ENCODE measurements at regions of chr12 and their contacts with region 1.

Region 1: DNA sequence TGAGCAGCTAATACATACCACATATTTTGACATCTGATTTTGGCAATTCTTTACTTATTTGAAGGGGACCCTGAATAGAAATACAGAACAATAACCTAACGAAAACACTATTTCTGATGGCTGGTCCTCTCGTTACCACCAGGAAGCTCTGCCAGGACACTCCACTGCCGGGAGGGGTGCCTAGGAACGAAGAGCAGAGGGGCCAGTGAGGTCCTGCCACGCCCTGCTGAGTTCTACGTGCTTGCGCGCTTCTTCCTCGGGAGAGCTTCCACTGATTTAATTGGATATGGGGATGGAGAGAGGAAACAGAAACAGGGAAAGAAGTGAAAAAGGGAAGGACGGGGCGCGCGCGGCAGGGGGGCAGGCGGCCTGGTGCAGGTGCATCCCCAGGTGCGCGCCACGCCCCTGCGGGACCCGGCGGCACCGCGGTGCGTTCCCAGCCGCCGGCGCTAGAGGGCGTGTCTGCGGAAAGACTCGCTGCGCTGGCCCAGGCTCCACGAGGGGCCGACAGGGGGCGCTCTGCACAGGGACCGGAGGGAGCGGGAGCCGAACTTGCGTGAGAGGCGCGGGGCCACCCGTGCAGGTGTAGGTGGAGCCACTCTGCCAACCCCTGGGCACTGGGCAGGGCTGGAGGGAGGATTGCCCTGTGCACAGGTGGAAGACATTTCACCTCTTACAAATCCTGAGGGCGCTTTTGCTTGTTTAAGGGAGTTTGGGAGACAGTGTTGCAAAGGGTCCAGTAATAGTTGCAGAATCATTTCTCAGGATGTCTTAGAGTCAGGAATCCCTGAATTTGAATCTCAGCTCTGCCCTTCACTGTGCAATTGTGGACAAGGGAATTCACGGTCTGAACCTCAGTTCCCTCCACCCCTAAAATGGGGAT is 986.3 kb upstream of the TMEM132C start:
- DNase-seq: peak in 1 of 2 experiments; percentile 68
- H3K4me3 ChIP-seq: no peak overlapping the region
- H3K4me3 Mint-ChIP-seq: no peak overlapping the region
- H3K27ac Mint-ChIP-seq: no peak overlapping the region
- H3K4me1 ChIP-seq: no peaks in the 10 kb centered on the region
- H3K4me1 Mint-ChIP-seq: no peaks in the 10 kb centered on the region
- H3K27me3 ChIP-seq: no peaks in the 10 kb centered on the region
- H3K27me3 Mint-ChIP-seq: peaks cover 6% of the 10 kb centered on the region
- CTCF ChIP-seq: peak; percentile 66 to 88

Region 2: GRCh38 chr12:127257366-127257935 is 23.2 kb before region 1 on chr12:
- CTCF ChIA-PET with region 1: no interaction called
- POLR2A ChIA-PET with region 1: no interaction called
- intact Hi-C with region 1: no loop called
- DNase-seq: no peak
- H3K4me3 ChIP-seq: no peak overlapping the region
- H3K4me3 Mint-ChIP-seq: no peak overlapping the region
- H3K27ac Mint-ChIP-seq: no peak overlapping the region
- H3K4me1 ChIP-seq: no peaks in the 10 kb centered on the region
- H3K4me1 Mint-ChIP-seq: no peaks in the 10 kb centered on the region
- H3K27me3 ChIP-seq: no peaks in the 10 kb centered on the region
- H3K27me3 Mint-ChIP-seq: no peaks in the 10 kb centered on the region
- CTCF ChIP-seq: no peak

Region 3: GRCh38 chr12:127355061-127355841 is 74.6 kb after region 1 on chr12:
- CTCF ChIA-PET with region 1: no interaction called
- POLR2A ChIA-PET with region 1: no interaction called
- intact Hi-C with region 1: loop called (anchors 5 kb)
- DNase-seq: peak in 1 of 2 experiments; percentile 19
- H3K4me3 ChIP-seq: no peak overlapping the region
- H3K4me3 Mint-ChIP-seq: no peak overlapping the region
- H3K27ac Mint-ChIP-seq: no peak overlapping the region
- H3K4me1 ChIP-seq: no peaks in the 10 kb centered on the region
- H3K4me1 Mint-ChIP-seq: no peaks in the 10 kb centered on the region
- H3K27me3 ChIP-seq: no peaks in the 10 kb centered on the region
- H3K27me3 Mint-ChIP-seq: no peaks in the 10 kb centered on the region
- CTCF ChIP-seq: peak; percentile 32 to 45

Region 4: DNA sequence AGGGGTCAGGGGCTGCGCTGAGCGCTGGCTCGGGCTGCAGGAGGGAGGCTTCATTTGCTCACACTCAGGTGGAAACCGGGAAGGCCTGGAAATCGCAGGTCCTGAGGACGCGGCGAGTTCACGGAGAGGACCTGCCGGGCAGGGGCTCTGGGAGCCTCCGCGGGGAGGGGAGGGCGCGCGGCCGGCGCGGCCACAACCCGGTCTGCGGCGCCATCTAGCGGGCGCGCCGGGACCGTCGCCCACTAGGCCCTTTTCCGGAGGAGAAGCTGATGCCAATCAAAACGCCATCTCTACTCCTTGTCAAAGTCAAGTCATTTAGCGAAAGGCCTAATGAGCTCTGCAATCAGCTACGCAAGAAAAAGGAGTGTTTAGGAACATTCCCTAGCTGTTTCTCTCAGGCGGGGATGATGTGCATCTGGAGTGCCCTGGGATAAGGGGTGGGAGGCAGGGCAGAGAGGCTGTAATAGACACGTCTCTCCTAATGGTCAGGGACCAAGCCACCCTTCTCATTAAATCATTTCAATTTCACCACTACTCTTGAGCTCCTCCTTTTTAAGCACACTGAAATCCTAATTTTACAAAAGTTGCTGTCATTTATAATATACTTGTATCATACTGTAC is 100.5 kb after region 1 on chr12:
- CTCF ChIA-PET with region 1: interaction called, 3 read pairs
- POLR2A ChIA-PET with region 1: no interaction called
- intact Hi-C with region 1: loop called (anchors 1 kb)
- DNase-seq: peak; percentile 51 to 75
- H3K4me3 ChIP-seq: no peak overlapping the region
- H3K4me3 Mint-ChIP-seq: peak overlapping the region; percentile 33
- H3K27ac Mint-ChIP-seq: no peak overlapping the region
- H3K4me1 ChIP-seq: no peaks in the 10 kb centered on the region
- H3K4me1 Mint-ChIP-seq: no peaks in the 10 kb centered on the region
- H3K27me3 ChIP-seq: no peaks in the 10 kb centered on the region
- H3K27me3 Mint-ChIP-seq: no peaks in the 10 kb centered on the region
- CTCF ChIP-seq: peak; percentile 55 to 82

Measured in Caco-2 (cell line).